ENCODE measurements at regions of chr10 and their contacts with region 1.

Region 1: DNA sequence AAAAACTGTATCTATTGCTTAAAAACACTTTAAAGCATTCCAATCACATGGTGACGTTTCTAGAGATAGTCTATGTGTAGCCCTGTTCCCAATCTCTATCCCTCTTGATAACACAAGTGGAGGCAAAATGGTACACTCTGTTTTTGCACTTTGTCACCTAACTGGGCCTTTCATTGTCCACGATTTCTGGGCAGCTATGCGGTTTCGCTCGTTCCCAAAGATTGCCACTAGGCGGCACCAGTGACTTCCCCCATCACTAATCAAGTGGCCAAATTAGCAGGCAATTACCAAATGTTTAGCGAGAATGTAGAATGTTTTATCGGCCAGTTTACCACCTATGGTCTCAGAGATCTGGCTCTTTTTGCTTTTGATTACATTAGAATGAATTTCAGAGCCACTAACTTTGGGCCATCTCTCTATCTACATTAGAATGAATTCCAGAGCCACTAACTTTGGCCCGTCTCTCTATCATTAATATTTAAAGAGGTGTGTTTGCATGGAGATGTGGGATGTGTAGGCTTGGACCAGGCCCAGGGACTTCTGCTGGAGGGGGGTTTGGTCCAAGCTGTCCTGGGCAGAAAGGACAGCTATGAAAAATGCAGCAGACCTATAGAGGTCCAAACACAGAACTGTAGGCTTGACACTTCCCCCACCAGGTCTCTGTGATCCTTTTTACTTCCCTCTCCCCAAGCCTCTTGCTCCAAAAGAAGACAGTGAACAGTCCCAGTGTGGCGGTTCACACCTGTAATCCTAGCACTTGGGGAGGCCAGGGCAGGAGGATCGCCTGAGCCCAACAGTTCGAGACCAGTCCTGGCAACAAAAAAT is 90.1 kb downstream of the EPC1 start:
- DNase-seq: peak; percentile 63 to 70
- ATAC-seq: peak; percentile 58 to 85 (median 74)
- H3K4me3 ChIP-seq: peak overlapping the region in 1 of 10 donors; percentile 23
- H3K27ac ChIP-seq: no peak overlapping the region
- H3K4me1 ChIP-seq: peaks cover 0 to 8% (median 0%) of the 10 kb centered on the region in 9 donors
- H3K27me3 ChIP-seq: no peaks in the 10 kb centered on the region
- CTCF ChIP-seq: peak; percentile 80 to 93 (median 90)

Region 2: GRCh38 chr10:32180371-32181280 is 76.2 kb before region 1 on chr10:
- intact Hi-C with region 1: no loop called
- DNase-seq: no peak
- ATAC-seq: no peak
- H3K4me3 ChIP-seq: no peak overlapping the region
- H3K27ac ChIP-seq: peak overlapping the region in 1 of 10 donors; percentile 36
- H3K4me1 ChIP-seq: no peaks in the 10 kb centered on the region
- H3K27me3 ChIP-seq: no peaks in the 10 kb centered on the region
- CTCF ChIP-seq: no peak

Region 3: DNA sequence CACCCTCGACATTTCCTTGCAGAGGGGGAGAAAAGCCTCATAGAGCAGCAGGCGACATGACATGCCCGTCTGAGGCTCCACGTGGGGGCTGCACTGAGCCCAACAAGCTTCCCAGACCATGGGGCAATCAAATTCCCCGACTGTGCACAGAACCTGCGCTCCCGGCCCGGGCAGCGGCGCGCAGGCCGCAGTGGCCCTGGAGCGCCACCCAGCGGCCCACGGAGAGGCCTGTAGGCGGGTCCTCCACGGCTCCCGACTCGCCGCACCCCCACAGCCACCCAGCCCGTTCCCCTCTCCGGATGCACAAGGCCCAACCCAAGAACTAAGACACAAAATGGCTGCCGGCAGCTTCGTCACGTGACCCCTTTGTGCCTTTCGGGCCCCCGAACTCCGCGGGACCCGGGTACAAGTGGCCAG is 89.3 kb after region 1 on chr10:
- intact Hi-C with region 1: loop called (anchors 1 to 10 kb)
- DNase-seq: peak; percentile 95 to 97
- ATAC-seq: peak; percentile 96 to 99 (median 97)
- H3K4me3 ChIP-seq: peak overlapping the region; percentile 87 to 99 (median 93)
- H3K27ac ChIP-seq: peak overlapping the region; percentile 100
- H3K4me1 ChIP-seq: peaks cover 6 to 79% (median 64%) of the 10 kb centered on the region in 9 donors
- H3K27me3 ChIP-seq: no peaks in the 10 kb centered on the region
- CTCF ChIP-seq: peak; percentile 96 to 100 (median 98)

Region 4: GRCh38 chr10:32360243-32360642 is 103.4 kb after region 1 on chr10:
- intact Hi-C with region 1: loop called in 6 of 10 experiments (anchors 5 kb)
- DNase-seq: no peak
- ATAC-seq: no peak
- H3K4me3 ChIP-seq: no peak overlapping the region
- H3K27ac ChIP-seq: no peak overlapping the region
- H3K4me1 ChIP-seq: peaks cover 0 to 18% (median 10%) of the 10 kb centered on the region in 9 donors
- H3K27me3 ChIP-seq: no peaks in the 10 kb centered on the region
- CTCF ChIP-seq: no peak

Region 5: DNA sequence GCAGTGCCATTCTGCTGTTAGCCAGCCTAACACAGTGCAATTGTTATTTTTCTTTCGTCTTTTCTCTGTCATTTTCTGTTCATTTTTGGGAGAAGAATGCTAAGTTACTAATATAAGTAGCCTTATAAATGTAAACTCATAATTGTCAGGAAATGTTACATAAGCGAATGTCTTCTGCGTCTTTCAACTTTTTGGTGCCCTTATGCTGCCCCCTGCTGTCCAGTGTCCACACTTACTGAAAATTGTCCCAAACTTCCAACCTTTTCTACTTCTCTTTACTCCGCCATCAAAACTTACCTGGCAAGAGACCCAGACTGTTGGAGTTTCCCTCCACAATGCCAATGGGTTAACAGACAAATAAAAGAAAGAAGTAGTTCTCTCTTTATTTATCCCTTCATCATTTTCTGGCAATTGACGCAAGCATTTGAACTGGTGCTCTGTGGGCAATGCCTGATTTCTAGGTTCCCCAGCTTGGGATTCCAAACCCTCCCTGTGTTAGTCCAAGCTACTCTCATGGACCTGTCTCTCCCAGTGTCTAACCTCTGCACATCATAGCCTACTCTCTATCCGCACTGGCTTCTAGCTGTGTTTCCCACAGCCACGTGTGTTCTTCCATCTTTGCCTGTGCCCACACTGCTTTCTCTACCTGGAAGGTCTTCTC is 111.1 kb after region 1 on chr10:
- intact Hi-C with region 1: loop called in 8 of 10 experiments (anchors 1 to 5 kb)
- DNase-seq: peak; percentile 44 to 84
- ATAC-seq: peak in 7 of 8 donors; percentile 28 to 63 (median 50)
- H3K4me3 ChIP-seq: peak overlapping the region in 4 of 10 donors; percentile 11 to 34 (median 26)
- H3K27ac ChIP-seq: peak overlapping the region in 6 of 10 donors; percentile 0 to 38 (median 32)
- H3K4me1 ChIP-seq: peaks cover 0 to 66% (median 33%) of the 10 kb centered on the region in 9 donors
- H3K27me3 ChIP-seq: no peaks in the 10 kb centered on the region
- CTCF ChIP-seq: peak; percentile 61 to 91 (median 84)

Region 6: DNA sequence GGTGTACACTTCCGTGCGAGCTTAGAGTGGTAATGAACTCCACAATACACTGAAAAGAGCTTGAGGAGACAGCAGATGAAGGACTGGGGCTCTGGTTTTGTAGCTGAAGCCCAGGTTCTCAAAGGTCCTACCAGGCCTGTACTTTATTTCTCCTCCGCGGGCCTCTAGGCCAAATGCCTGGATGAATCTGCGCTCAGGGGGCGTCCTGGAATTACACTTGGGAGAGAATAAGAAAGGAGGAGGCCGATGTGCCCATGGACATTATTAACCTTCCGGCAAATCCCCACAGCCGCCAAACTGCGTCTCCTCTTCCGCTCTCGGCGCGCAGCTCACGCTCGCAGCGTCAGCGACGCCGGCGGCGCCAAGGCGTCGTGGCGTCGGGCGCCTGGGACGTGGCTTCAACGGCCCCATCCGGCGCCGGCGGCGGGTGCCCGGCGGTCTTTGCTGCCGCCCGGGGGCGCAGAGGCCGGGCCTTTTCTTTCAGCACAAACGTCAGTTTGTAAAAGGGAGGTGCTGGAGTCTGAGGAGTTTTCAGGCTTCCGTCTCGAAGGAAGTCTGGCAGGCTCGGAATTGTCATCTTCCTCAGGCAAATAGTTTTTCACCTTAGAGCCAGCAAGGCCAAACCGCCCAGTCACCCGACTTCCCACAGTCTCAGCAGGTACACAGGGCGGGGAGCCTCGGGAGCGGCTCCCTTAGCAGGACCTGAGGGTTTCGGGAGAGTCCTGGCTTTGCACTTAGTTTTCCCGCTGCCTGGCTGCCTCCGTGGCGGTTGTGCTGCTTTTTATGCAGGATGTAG is 189.1 kb after region 1 on chr10 and contains the start of gene CCDC7:
- intact Hi-C with region 1: loop called in 4 of 10 experiments (anchors 1 to 10 kb)
- DNase-seq: peak; percentile 85 to 89
- ATAC-seq: peak; percentile 98 to 99 (median 98)
- H3K4me3 ChIP-seq: peak within 1 kb of the TSS; percentile 56 to 85 (median 74)
- H3K27ac ChIP-seq: peak within 1 kb of the TSS; percentile 95 to 99 (median 98)
- H3K4me1 ChIP-seq: peaks cover 0 to 19% (median 9%) of the 10 kb centered on the region in 9 donors
- H3K27me3 ChIP-seq: no peaks in the 10 kb centered on the region
- CTCF ChIP-seq: peak; percentile 33 to 84 (median 55)
- total RNA-seq, gene CCDC7: 17.8 to 34.1 (median 21.0) TPM

Region 7: DNA sequence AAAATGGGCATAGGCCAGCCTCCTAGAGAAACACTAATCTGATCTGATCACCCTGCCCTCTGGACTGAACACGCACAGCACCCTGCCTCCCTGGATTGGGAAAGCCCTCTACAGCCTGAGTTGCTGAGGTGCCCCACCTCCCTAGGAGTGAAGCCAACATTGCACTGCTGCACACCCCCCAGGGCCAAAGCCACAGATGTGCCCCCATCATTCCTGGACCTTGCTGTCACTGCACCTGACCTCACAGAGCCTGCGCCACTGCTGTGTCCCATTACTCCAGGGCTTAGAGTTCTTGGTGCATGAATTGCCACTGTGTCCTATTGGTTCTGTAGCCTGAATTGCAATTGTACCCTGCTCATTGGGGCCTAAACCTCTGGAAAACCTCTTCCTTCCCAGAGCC is 599.6 kb after region 1 on chr10:
- intact Hi-C with region 1: no loop called
- DNase-seq: no peak
- ATAC-seq: no peak
- H3K4me3 ChIP-seq: no peak overlapping the region
- H3K27ac ChIP-seq: no peak overlapping the region
- H3K4me1 ChIP-seq: no peaks in the 10 kb centered on the region
- H3K27me3 ChIP-seq: no peaks in the 10 kb centered on the region
- CTCF ChIP-seq: no peak